ENCODE measurements at regions of chr2 and their contacts with region 1.

Region 1: GRCh38 chr2:101419096-101419663 is 31.9 kb upstream of the CREG2 start:
- DNase-seq: peak; percentile 44
- H3K4me3 ChIP-seq: no peak overlapping the region
- H3K27ac ChIP-seq: no peak overlapping the region
- H3K4me1 ChIP-seq: no peaks in the 10 kb centered on the region
- H3K27me3 ChIP-seq: no peaks in the 10 kb centered on the region
- CTCF ChIP-seq: peak; percentile 59 to 70 (median 63)
- EP300 ChIP-seq: no peak
- POLR2A ChIP-seq: no peak

Region 2: DNA sequence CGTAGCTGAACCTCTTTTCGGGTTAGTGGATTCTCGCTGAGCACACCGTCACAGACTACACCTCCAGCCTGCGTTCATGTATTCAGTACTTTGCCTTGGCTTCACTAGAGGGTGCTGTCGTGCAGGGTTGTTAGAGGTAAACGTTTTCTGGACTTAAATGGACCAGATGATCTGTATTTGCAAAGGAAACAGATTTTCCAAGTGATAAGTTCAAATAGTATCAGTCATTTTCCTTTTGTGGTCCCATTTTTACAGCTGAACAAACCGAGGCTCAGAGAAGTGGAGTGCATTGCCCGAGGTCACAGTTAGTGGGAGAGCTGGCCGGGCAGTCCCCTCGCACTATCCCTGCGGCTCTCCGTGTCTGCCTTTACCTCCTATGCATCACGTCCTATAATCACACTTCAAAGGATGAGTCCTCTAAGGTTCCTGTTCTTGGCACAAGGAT is 404.2 kb after region 1 on chr2:
- in situ Hi-C with region 1: loop called in 3 of 4 experiments (anchors 5 to 25 kb)
- intact Hi-C with region 1: no loop called
- DNase-seq: peak; percentile 71
- H3K4me3 ChIP-seq: no peak overlapping the region
- H3K27ac ChIP-seq: no peak overlapping the region
- H3K4me1 ChIP-seq: peaks cover 10 to 40% (median 17%) of the 10 kb centered on the region in 4 donors
- H3K27me3 ChIP-seq: no peaks in the 10 kb centered on the region
- CTCF ChIP-seq: peak; percentile 53 to 65 (median 61)
- EP300 ChIP-seq: no peak
- POLR2A ChIP-seq: no peak

Region 3: DNA sequence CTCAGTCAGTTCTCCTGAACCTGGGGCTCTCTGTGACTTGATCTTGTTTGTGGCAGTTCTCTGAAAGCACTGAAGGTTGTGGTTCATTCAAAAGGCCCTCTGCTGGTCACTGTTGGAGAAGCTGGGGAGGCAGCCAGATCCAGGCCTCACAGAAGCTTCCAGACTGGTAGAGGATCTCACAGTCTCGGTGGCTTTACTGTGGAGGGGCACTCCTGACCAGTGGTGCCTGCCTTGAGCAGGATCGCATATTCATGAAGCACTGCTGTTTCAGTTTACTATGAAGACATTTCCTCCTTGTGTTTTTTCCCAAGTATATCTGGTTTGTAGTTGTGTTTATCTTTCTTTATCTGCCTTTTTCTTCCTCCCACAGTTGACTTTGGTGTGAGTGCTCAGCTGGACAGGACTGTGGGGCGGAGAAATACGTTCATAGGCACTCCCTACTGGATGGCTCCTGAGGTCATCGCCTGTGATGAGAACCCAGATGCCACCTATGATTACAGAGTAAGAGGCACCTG is 412.2 kb after region 1 on chr2:
- in situ Hi-C with region 1: loop called (anchors 5 to 25 kb)
- intact Hi-C with region 1: loop called (anchors 1 kb)
- DNase-seq: peak; percentile 72
- H3K4me3 ChIP-seq: no peak overlapping the region
- H3K27ac ChIP-seq: peak overlapping the region; percentile 5 to 55 (median 15)
- H3K4me1 ChIP-seq: peaks cover 0 to 31% (median 4%) of the 10 kb centered on the region in 4 donors
- H3K27me3 ChIP-seq: no peaks in the 10 kb centered on the region
- CTCF ChIP-seq: peak; percentile 66 to 76 (median 73)
- EP300 ChIP-seq: no peak
- POLR2A ChIP-seq: no peak